ENCODE measurements at regions of chr16 and their contacts with region 1.

Region 1: GRCh38 chr16:19393226-19394074 is 24.2 kb upstream of the TMC5 start:
- DNase-seq: no peak
- CTCF ChIP-seq: no peak

Region 2: DNA sequence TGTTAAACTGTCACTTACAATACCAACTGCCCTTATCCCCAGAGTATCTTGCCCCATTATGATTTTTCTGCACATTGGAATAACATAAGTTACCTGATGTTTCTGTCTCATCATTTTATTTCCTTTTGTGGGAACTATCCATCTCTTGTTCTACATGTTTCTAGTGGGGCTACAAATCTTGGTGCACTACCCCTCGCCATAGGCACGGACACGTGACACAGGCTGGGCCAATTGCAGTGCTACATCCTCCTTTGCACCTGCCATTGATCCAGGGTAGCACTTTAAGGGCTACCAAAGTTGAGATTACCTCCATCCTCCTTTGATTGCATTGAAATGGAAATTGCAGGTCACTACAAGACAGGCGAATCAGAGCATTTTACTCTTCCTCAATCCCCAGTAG is 239.6 kb before region 1 on chr16:
- in situ Hi-C with region 1: no loop called
- DNase-seq: no peak
- CTCF ChIP-seq: no peak

Region 3: GRCh38 chr16:19497176-19497575 is 103.7 kb after region 1 on chr16:
- in situ Hi-C with region 1: loop called (anchors 10 kb)
- DNase-seq: no peak
- CTCF ChIP-seq: no peak